Activated CD8-positive, alpha-beta T cell treated with anti-CD3 and anti-CD28 coated beads for 36 hours (primary cell): ENCODE measurements at regions of chr17 and their contacts with region 1.

Region 1: GRCh38 chr17:39164675-39165143 is 1.3 kb downstream of the ARL5C start:
- DNase-seq: peak; percentile 90
- ATAC-seq: peak; percentile 97
- H3K4me3 Mint-ChIP-seq: peak overlapping the region; percentile 79
- H3K27ac Mint-ChIP-seq: peak overlapping the region; percentile 55
- H3K4me1 Mint-ChIP-seq: peaks cover 14% of the 10 kb centered on the region
- H3K27me3 Mint-ChIP-seq: peaks cover 12% of the 10 kb centered on the region
- CTCF ChIP-seq: peak; percentile 91

Region 2: GRCh38 chr17:39057701-39058206 is 107.0 kb before region 1 on chr17:
- CTCF ChIA-PET with region 1: interaction called, 12 read pairs
- POLR2A ChIA-PET with region 1: no interaction called
- intact Hi-C with region 1: no loop called
- DNase-seq: no peak
- ATAC-seq: no peak
- H3K4me3 Mint-ChIP-seq: peak overlapping the region; percentile 75
- H3K27ac Mint-ChIP-seq: no peak overlapping the region
- H3K4me1 Mint-ChIP-seq: peaks cover 10% of the 10 kb centered on the region
- H3K27me3 Mint-ChIP-seq: no peaks in the 10 kb centered on the region
- CTCF ChIP-seq: no peak

Region 3: GRCh38 chr17:39144416-39144840 is 20.3 kb before region 1 on chr17:
- CTCF ChIA-PET with region 1: interaction called, 21 read pairs
- POLR2A ChIA-PET with region 1: no interaction called
- intact Hi-C with region 1: no loop called
- DNase-seq: no peak
- ATAC-seq: no peak
- H3K4me3 Mint-ChIP-seq: no peak overlapping the region
- H3K27ac Mint-ChIP-seq: no peak overlapping the region
- H3K4me1 Mint-ChIP-seq: peaks cover 19% of the 10 kb centered on the region
- H3K27me3 Mint-ChIP-seq: no peaks in the 10 kb centered on the region
- CTCF ChIP-seq: no peak

Region 4: DNA sequence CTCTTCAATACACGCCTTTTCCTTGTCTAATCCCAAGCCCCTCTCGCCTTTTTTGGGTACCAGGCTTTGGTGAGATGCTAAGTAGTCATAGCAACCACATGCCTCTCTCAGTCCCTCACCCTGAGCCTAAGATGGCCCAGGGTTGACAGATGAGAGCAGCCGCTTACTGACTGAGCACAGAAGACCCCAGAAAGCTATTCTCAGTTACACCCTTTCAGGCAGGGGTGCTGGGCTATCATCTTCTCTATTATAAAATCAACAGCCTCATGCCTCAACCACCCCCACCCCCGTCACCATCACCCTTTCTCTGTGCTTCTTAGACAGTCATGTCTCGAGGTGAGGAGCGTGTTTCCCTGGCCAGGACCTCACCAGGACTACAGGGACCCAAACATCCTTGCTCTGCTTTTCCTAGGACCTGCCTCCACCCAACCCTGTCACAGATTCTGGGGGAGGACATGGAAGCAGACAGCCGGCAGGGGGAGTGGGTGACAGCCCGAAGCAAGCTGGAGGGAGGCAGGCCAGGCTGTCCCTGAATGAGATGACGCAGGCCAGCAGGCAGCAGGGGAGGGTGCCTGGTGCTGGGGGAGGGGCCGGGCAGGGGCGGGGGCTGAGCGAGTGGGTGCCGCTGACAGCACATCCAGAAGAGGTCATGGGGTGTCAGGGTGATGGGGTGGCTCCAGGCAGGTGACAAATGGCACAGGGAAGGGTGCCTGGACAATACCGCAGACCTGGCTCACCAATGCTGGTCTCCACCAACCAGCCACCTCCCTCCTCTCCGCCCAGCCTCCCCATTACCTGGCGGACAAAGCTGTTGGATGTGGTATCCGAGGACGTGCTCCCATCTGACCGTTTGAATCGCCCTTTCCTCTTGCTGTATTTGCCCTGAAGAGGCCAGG is 29.6 kb after region 1 on chr17:
- CTCF ChIA-PET with region 1: interaction called, 16 read pairs
- POLR2A ChIA-PET with region 1: interaction called, 9 read pairs
- intact Hi-C with region 1: no loop called
- DNase-seq: no peak
- ATAC-seq: no peak
- H3K4me3 Mint-ChIP-seq: no peak overlapping the region
- H3K27ac Mint-ChIP-seq: no peak overlapping the region
- H3K4me1 Mint-ChIP-seq: peaks cover 22% of the 10 kb centered on the region
- H3K27me3 Mint-ChIP-seq: no peaks in the 10 kb centered on the region
- CTCF ChIP-seq: no peak

Region 5: GRCh38 chr17:39209317-39210092 is 44.8 kb after region 1 on chr17:
- CTCF ChIA-PET with region 1: interaction called, 23 read pairs
- POLR2A ChIA-PET with region 1: interaction called, 3 read pairs
- intact Hi-C with region 1: no loop called
- DNase-seq: peak; percentile 92
- ATAC-seq: peak; percentile 86
- H3K4me3 Mint-ChIP-seq: peak overlapping the region; percentile 44
- H3K27ac Mint-ChIP-seq: peak overlapping the region; percentile 77
- H3K4me1 Mint-ChIP-seq: peaks cover 38% of the 10 kb centered on the region
- H3K27me3 Mint-ChIP-seq: no peaks in the 10 kb centered on the region
- CTCF ChIP-seq: no peak

Region 6: GRCh38 chr17:39235555-39236449 is 71.1 kb after region 1 on chr17:
- CTCF ChIA-PET with region 1: interaction called, 18 read pairs
- POLR2A ChIA-PET with region 1: no interaction called
- intact Hi-C with region 1: no loop called
- DNase-seq: peak; percentile 80
- ATAC-seq: peak; percentile 77
- H3K4me3 Mint-ChIP-seq: no peak overlapping the region
- H3K27ac Mint-ChIP-seq: no peak overlapping the region
- H3K4me1 Mint-ChIP-seq: peaks cover 35% of the 10 kb centered on the region
- H3K27me3 Mint-ChIP-seq: peaks cover 2% of the 10 kb centered on the region
- CTCF ChIP-seq: peak; percentile 83

Region 7: DNA sequence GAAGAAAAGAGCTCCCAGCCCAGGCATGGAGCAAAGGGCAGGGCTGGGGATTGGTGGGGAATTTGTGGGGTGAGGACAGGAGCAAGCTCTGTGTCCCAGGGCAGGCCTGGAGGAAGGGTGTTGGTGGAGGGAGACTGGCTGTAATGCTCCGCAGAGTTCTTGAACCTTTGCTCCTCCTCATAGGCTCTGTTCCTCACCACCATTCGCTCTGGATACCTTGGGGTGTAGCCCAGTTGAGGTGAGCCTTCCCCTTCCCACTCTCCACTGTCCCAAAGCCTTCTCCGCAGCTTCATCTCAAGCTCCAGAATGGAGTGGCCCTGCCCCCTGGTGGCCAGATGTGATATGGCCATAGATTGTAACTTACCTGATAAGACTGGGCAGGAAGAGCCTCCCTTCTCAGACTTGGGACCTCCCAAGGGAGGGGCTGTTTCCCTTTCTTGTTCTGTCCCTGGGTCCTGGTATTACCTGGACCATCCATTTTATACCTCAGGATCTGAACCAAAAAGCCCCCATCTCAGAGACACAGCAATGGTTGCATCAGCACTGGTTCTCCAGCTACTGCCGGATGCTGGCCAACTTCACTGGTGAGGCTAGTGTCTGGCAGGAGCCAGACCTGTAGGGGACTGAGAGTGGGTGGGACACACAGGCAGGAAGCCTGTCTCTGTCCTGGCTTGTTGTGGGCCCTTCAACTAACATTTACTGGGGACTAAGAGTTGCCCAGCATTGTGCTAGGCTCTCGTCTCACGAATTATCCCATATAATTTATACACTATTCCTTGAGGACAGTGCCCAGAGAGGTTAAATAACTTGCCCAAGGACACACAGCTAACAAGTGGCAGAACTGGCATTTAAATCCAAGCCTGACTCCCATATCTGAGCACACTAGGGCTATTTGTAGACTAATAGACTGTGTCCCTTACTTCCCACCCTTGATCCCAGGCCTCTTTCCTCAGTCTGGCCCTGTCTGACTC is 80.2 kb after region 1 on chr17:
- CTCF ChIA-PET with region 1: interaction called, 22 read pairs
- POLR2A ChIA-PET with region 1: no interaction called
- intact Hi-C with region 1: no loop called
- DNase-seq: peak; percentile 96
- ATAC-seq: peak; percentile 96
- H3K4me3 Mint-ChIP-seq: no peak overlapping the region
- H3K27ac Mint-ChIP-seq: no peak overlapping the region
- H3K4me1 Mint-ChIP-seq: peaks cover 13% of the 10 kb centered on the region
- H3K27me3 Mint-ChIP-seq: no peaks in the 10 kb centered on the region
- CTCF ChIP-seq: peak; percentile 97